Activated naive CD4-positive, alpha-beta T cell treated with anti-CD3 and anti-CD28 coated beads for 36 hours (primary cell): ENCODE measurements at regions of chr4 and their contacts with region 1.

Region 1: DNA sequence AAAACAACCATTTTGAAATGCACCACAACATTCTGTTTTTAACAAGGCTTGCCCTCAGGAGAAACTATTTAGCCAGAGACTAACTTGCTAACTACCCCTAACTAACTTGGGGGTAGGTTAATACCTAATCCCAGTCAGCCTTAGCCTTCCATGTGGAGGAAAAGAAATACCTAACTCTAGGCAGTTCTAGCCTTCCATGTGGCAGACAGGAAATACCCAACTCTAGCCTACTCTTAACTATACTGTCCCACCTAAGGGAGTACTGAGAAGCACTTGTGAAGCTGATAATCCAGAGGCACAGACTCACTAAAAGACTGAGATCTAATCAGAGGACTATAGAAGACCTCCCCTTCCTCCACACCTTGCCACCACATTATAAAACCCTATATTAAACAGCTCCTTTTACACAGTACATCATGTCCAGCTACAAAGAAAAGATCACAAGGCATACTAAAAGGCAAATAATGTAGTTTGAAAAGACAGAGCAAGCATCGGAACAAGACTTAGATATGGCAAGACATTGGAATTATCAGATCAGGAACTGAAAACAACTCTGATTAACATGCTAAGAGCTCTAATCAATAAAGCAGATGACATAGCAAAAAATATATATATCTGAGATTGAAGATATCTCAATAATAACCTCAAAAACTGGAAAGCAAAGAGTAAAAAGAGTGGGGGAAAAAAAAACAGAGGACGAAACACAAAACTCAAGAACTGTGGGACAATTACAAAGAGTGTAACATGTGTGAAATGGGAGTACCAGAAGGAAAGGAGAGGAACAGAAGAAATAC is 52.2 kb downstream of the FRYL start:
- DNase-seq: no peak
- H3K4me3 Mint-ChIP-seq: no peak overlapping the region
- H3K27ac Mint-ChIP-seq: no peak overlapping the region
- H3K4me1 Mint-ChIP-seq: peaks cover 87% of the 10 kb centered on the region
- H3K27me3 Mint-ChIP-seq: no peaks in the 10 kb centered on the region

Region 2: DNA sequence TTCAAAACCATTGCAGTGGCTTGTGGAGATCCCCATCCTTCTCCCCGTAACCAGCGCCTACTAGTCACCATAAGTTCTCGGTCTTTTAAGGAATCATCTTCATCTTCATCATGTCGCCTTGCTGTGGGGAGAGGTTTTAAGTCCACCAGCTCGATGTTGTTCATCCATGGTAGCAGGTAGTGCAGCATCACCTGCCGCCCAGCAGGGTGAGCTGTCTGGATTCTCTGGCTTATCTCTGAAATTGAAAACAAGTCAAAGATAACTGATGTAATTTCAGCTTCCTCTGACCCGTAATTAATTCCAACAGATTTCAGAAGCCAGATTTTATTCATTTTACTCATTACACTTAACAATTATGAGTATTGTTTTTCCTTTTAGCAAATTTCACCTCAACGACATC is 170.4 kb before region 1 on chr4:
- CTCF ChIA-PET with region 1: no interaction called
- intact Hi-C with region 1: no loop called
- DNase-seq: peak; percentile 9
- H3K4me3 Mint-ChIP-seq: no peak overlapping the region
- H3K27ac Mint-ChIP-seq: no peak overlapping the region
- H3K4me1 Mint-ChIP-seq: no peaks in the 10 kb centered on the region
- H3K27me3 Mint-ChIP-seq: no peaks in the 10 kb centered on the region

Region 3: DNA sequence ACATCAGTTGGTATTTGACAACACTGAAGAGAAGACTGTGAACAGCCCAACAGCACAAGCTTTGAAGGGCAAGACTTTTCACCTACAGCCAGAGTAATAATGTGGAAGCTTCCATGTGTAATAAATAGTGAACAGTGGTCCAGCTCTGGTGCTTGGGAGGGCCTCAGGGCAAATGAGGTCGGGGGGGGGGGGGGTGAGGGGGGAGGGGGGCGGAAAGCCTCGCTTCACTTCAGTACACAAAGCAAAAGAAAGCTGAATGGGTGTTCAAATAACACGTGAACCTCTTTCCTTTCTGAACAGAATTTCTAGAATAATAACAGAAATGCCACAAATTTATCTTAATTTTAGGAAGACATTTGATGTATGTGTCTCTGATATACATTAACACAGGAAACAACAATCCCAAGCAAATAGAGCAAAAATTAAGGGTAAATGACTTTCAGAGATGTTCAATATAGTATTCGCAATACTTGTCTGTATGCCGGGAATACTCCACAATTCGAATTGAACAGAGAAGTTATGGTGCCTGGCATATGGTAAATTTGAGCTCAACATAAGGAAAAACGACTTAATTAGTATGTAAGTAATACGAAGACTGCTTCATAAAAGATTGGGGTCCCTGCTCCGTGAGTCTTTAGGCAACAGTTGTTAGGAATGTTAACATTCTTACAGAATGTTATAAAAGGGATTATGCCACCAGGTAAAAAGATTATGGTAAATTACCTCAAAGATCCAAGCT is 40.4 kb before region 1 on chr4:
- CTCF ChIA-PET with region 1: no interaction called
- intact Hi-C with region 1: no loop called
- DNase-seq: no peak
- H3K4me3 Mint-ChIP-seq: no peak overlapping the region
- H3K27ac Mint-ChIP-seq: no peak overlapping the region
- H3K4me1 Mint-ChIP-seq: peaks cover 34% of the 10 kb centered on the region
- H3K27me3 Mint-ChIP-seq: no peaks in the 10 kb centered on the region

Region 4: GRCh38 chr4:48698029-48698971 is 29.6 kb before region 1 on chr4:
- CTCF ChIA-PET with region 1: no interaction called
- intact Hi-C with region 1: loop called (anchors 1 kb)
- DNase-seq: no peak
- H3K4me3 Mint-ChIP-seq: no peak overlapping the region
- H3K27ac Mint-ChIP-seq: no peak overlapping the region
- H3K4me1 Mint-ChIP-seq: peaks cover 55% of the 10 kb centered on the region
- H3K27me3 Mint-ChIP-seq: no peaks in the 10 kb centered on the region

Region 5: DNA sequence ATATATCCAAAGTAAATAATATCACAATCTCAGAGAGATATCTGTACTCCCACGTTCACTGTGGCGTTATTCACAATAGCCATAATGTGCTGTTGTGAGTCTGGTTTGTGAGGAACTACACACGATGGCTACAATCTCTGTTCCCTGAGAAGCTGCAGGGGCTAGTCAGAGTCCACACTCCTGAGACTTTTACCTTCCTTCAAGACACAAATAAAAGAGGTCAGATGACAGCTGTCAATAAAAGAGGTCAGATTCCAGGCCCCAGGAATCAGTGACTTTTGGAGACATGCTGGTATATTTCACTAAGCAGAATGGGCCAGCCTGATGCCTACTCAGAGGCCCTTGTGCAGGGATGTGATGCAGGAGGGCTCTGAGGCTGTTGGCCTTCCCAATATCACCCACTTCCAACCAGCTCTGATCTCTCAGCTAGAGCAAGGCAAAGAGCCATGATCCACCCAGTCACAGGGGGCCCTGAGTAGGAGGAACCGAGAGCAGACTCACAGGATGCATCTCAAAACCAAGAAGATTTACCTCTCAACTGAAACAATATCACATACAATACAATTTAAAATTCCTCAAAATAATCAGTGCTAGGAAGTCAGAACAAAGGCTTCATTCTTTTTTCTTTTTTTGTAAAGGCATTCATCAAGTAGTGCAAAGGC is 38.4 kb after region 1 on chr4:
- CTCF ChIA-PET with region 1: no interaction called
- intact Hi-C with region 1: no loop called
- DNase-seq: peak; percentile 38
- H3K4me3 Mint-ChIP-seq: no peak overlapping the region
- H3K27ac Mint-ChIP-seq: no peak overlapping the region
- H3K4me1 Mint-ChIP-seq: peaks cover 55% of the 10 kb centered on the region
- H3K27me3 Mint-ChIP-seq: no peaks in the 10 kb centered on the region

Region 6: DNA sequence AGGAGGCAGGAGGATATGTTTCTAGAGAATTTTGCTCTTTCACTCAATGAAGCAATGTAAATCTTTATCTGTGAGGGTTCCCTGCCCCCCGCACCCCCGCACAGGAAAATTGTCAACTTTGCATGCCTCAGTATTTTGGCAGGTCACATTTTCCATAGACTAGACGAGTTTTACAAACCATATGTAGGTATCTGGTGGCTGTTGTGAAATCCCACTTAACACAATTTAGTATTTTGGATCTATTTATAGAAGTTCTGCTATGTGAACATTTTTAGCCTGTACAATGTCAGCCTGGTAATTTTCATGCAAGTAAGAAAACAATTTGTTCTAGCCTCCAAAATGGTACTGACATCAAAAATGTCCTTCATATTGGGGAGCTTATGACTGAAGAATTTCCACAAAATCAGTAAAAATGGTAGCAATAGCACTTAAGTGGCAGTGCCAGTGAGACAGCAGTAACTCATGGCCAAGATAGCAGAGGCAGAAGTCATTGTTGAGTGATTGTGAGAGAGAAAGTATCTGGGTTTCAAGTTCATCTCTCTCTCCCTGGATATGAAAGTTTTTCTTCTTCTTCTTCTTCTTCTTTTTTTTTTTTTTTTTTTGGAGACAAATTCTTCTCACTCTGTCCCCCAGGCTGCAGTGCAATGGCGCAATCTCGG is 64.6 kb after region 1 on chr4:
- CTCF ChIA-PET with region 1: no interaction called
- intact Hi-C with region 1: no loop called
- DNase-seq: no peak
- H3K4me3 Mint-ChIP-seq: no peak overlapping the region
- H3K27ac Mint-ChIP-seq: no peak overlapping the region
- H3K4me1 Mint-ChIP-seq: peaks cover 8% of the 10 kb centered on the region
- H3K27me3 Mint-ChIP-seq: no peaks in the 10 kb centered on the region